ENCODE measurements at regions of chr19 and their contacts with region 1.

Region 1: GRCh38 chr19:14081325-14082093 is 4.1 kb downstream of the C19orf67 start:
- DNase-seq: peak; percentile 99
- H3K4me3 Mint-ChIP-seq: peak overlapping the region; percentile 96
- H3K27ac Mint-ChIP-seq: peak overlapping the region; percentile 97
- H3K4me1 Mint-ChIP-seq: peaks cover 8% of the 10 kb centered on the region
- H3K27me3 Mint-ChIP-seq: no peaks in the 10 kb centered on the region

Region 2: GRCh38 chr19:13774217-13775191 is 307.0 kb before region 1 on chr19 and contains the start of gene C19orf53:
- intact Hi-C with region 1: loop called (anchors 5 kb)
- DNase-seq: peak; percentile 87
- H3K4me3 Mint-ChIP-seq: peak within 1 kb of the TSS; percentile 100
- H3K27ac Mint-ChIP-seq: peak within 1 kb of the TSS; percentile 99
- H3K4me1 Mint-ChIP-seq: peaks cover 25% of the 10 kb centered on the region
- H3K27me3 Mint-ChIP-seq: no peaks in the 10 kb centered on the region
- total RNA-seq, gene C19orf53: 158 and 162 TPM in 2 replicates

Measured in activated T-helper 1 cell treated with anti-CD3 and anti-CD28 coated beads, Interleukin-12 subunit alpha, Interleukin-12 subunit beta, Interleukin-2, Interleukin-4 antibody, amounts not matched to agents 30 ng/mL and 10 ng/mL and 1 ng/mL, durations not matched to agents 14 hours and 24 hours and 36 hours (primary cell).